ENCODE measurements at regions of chr6 and their contacts with region 1.

Region 1: DNA sequence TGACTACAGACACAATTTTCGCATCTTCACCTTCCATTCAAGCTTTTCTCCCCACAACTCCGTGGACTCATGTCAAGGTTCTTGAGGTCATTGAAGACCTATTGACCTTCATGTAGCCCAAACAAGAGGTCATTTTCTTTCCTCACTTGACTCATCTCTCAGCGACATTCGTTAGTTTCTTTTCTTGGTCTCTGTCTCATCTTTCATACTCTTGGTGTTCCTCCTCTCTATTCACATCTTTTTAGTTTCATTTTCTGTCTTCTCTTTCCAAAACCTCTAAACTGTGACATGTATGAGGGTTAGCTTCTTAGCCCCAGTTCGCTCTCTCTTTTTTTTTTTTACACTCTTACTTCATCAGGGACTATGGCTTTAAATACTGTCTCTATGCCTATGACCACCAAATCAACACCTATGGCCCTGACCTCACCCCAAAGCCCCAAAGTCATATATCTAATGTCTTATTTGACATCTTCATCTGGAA is 128.6 kb upstream of the BACH2 start:
- DNase-seq: no peak
- ATAC-seq: peak; percentile 95
- H3K4me3 Mint-ChIP-seq: peak overlapping the region; percentile 64
- H3K27ac Mint-ChIP-seq: peak overlapping the region; percentile 91
- H3K4me1 Mint-ChIP-seq: peaks cover 15% of the 10 kb centered on the region
- H3K27me3 Mint-ChIP-seq: no peaks in the 10 kb centered on the region

Region 2: GRCh38 chr6:90393232-90393884 is 31.8 kb before region 1 on chr6:
- POLR2A ChIA-PET with region 1: interaction called, 10 read pairs
- DNase-seq: peak; percentile 69
- ATAC-seq: peak; percentile 87
- H3K4me3 Mint-ChIP-seq: peak overlapping the region; percentile 2
- H3K27ac Mint-ChIP-seq: peak overlapping the region; percentile 80
- H3K4me1 Mint-ChIP-seq: peaks cover 28% of the 10 kb centered on the region
- H3K27me3 Mint-ChIP-seq: no peaks in the 10 kb centered on the region

Region 3: GRCh38 chr6:90413867-90414266 is 11.3 kb before region 1 on chr6:
- POLR2A ChIA-PET with region 1: interaction called, 34 read pairs
- DNase-seq: peak; percentile 66
- ATAC-seq: peak; percentile 96
- H3K4me3 Mint-ChIP-seq: peak overlapping the region; percentile 87
- H3K27ac Mint-ChIP-seq: peak overlapping the region; percentile 99
- H3K4me1 Mint-ChIP-seq: peaks cover 40% of the 10 kb centered on the region
- H3K27me3 Mint-ChIP-seq: peaks cover 2% of the 10 kb centered on the region

Region 4: DNA sequence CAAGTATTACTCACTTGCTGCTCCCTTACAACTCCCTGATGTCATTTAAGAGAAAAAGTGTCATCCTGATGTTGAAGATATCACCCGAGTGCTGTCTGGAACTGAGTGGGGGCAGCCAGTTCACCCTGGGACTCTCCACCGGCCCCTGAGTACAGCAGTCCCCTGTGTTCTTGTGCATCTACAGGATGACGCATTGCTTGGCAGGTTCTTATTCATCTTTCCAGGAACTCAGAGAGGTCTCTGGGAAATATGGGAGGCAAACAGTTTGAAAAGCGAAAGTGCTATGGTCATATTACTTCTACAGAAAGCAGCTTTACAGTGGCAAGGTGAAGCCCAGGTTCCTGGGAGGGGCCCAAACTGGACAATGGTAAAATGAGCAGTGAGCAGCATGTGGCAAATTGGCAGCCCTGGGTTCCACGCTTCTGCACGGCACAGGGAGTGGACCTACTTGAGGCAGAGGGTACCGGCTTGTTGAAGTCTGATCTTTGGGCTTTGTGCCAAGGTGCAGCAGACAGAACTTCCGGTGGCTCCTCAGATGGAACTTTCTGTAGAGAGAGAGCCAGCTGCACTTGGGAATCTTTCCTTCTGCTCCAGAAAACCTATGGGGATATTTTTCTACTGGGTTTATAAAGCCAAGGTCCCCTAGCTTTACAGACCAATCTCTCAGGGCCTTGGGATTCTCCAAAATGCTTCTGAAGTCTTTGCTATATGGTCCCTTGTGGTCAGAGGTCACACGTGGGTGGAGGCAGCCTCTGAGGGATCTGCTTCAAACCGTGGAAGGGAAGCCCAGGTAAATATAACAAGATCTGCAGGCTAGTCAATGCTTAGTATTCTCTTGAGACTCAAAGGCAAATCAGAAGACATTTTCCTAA is 33.4 kb after region 1 on chr6:
- POLR2A ChIA-PET with region 1: interaction called, 30 read pairs
- DNase-seq: peak; percentile 68
- ATAC-seq: peak; percentile 87
- H3K4me3 Mint-ChIP-seq: peak overlapping the region; percentile 83
- H3K27ac Mint-ChIP-seq: peak overlapping the region; percentile 94
- H3K4me1 Mint-ChIP-seq: peaks cover 50% of the 10 kb centered on the region
- H3K27me3 Mint-ChIP-seq: no peaks in the 10 kb centered on the region

Measured in activated naive CD8-positive, alpha-beta T cell treated with anti-CD3 and anti-CD28 coated beads, Interleukin-2, amount 10 ng/mL, durations not matched to agents 7 days and 5 days (primary cell).